Posterior cingulate gyrus (tissue), 11 donors: ENCODE measurements at regions of chrX and their contacts with region 1.

Region 1: DNA sequence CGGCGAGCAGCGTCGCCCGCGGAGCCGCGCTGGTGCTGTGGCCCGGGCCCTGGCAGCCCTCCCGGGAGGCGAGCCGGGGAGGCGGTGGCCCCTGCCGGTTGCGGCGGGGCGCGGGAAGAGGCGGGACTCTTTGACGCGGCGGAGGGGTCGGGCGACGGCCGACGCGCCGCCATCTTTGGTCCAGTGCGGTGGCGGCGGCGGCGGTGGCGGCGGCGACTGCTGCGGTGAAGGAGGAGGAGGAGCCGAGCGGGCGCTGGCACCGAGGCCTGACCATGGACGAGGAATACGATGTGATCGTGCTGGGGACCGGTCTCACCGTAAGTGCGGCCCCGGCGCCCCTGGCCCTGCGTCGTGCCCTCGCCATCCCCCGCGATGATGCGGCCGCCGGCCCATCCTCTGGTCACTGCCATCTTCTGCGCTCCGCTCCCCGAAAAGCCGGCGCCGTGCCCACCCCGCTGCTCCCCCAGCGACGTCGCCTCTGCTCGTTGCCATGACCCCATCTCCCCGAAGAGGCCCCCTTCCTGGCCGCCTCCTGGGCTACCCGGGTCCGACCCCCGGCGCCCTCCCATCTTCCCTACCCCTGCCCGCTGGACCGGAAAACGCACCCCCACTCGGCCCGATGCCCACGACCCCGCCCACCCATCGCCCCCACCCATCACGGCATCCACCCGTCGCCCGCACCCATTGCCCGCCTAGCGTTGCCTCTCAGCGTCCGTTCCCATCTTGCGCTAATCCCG is at the start of gene GDI1:
- DNase-seq: peak in 4 of 10 donors; percentile 25 to 91 (median 70)

Region 2: DNA sequence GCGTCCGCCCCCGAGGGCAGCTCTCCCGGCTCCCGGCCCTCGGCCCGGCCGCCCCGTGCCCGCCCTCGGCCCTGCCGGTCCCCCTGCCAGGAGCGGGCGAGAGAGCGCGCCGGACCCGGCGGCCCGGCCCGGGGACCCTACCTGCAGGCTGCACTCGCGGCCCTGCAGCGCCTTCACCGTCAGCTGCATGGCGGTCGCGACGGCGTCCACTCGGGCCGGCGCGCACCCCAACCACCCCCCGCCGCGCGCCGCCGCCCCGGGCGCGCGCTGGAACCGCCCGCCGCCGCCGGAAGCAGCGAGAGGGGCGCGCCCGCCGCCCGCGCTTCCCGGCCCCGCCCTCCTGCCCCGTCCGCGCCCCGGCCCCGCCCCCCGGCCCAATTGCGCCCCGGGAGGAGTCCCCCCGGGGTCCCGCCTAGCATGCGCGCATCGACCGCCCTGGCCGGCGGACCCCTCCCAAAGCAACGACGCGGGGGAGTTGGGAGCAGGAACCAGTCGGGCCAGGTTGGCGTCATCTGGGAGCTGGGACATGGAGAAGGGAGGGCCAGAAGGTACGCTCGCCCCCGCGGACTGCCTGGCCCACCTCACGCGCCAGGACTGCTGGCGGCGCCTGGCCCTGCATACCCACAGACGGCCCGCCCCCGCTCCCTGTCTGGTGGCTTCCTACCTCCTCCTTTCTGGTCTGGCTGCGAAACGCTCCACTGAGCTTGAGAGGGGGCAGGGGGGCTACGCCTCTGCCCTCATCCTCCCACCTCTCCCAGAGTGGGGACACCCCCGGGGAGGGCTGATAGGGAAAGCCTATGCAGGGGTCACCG is 49.5 kb after region 1 on chrX and contains the start of gene UBL4A:
- intact Hi-C with region 1: loop called (anchors 2 kb)
- DNase-seq: peak in 7 of 10 donors; percentile 31 to 92 (median 55)